MCF 10A (cell line): ENCODE measurements at regions of chr5 and their contacts with region 1.

Region 1: GRCh38 chr5:179166886-179167841 is 107.0 kb downstream of the ZNF354C start:
- DNase-seq: no peak
- H3K4me3 Mint-ChIP-seq: no peak overlapping the region
- H3K27ac Mint-ChIP-seq: no peak overlapping the region
- H3K4me1 Mint-ChIP-seq: no peaks in the 10 kb centered on the region
- H3K27me3 Mint-ChIP-seq: no peaks in the 10 kb centered on the region
- CTCF ChIP-seq: peak; percentile 74

Region 2: DNA sequence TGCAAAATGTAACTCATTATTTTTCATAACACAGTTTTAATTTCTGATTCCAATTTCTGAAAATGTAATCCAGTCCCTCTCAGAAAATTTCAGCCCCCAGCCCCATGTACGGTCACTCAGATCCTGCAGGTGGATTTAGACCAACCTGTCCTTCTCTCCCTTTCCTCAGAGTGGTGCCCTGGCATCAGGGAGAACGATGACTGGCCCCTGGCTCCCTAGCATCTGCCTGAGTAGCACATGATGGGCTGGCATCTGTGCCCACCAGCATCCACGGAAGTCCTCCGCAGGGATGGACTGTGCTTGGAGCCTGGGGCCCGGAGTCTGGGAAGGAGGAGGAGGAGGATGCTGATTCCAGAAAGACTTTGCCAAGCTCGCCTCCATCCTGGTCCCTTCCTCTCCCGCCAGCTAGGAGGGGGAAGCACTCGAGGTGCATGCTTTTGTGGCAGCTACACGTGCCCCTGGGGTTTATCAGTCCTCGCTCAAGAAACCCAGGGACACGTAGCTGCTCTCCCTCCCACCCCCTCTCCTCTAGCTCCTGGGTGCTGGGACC is 328.8 kb after region 1 on chr5:
- CTCF ChIA-PET with region 1: interaction called, 16 read pairs
- POLR2A ChIA-PET with region 1: interaction called, 3 read pairs
- intact Hi-C with region 1: no loop called
- DNase-seq: peak; percentile 39
- H3K4me3 Mint-ChIP-seq: no peak overlapping the region
- H3K27ac Mint-ChIP-seq: no peak overlapping the region
- H3K4me1 Mint-ChIP-seq: no peaks in the 10 kb centered on the region
- H3K27me3 Mint-ChIP-seq: no peaks in the 10 kb centered on the region
- CTCF ChIP-seq: peak; percentile 21